ENCODE measurements at regions of chr11 and their contacts with region 1.

Region 1: GRCh38 chr11:28169816-28170215 is 61.6 kb downstream of the METTL15 start:
- DNase-seq: peak; percentile 71
- ATAC-seq: peak; percentile 79
- H3K4me3 ChIP-seq: no peak overlapping the region
- H3K27ac ChIP-seq: peak overlapping the region; percentile 53; the same call in 1 of the 2 replicates
- H3K4me1 ChIP-seq: peaks cover 6% of the 10 kb centered on the region
- H3K27me3 ChIP-seq: no peaks in the 10 kb centered on the region
- CTCF ChIP-seq: no peak
- POLR2A ChIP-seq: no peak
- RAD21 ChIP-seq: no peak

Region 2: DNA sequence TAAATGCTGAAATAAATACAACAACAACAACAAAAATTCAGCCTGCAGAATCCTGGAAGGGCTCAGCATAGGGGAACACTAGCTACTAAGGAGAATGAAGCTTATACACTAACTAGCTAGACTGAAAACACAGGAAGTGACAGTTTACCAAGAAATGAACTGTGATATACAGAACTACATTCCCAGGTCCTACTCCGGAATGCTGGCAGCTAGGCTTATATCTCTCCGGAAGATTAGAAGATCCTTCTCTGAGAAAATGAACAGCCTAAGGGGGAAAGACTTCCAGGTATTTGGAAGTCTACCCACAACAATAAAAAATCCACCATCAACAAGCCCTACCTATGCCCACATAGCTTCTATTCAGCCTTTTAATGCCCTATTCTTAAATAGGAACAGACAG is 837.8 kb before region 1 on chr11:
- CTCF ChIA-PET with region 1: no interaction called
- POLR2A ChIA-PET with region 1: no interaction called
- dilution Hi-C with region 1: no loop called
- in situ Hi-C with region 1: no loop called
- intact Hi-C with region 1: no loop called
- DNase-seq: peak; percentile 65
- ATAC-seq: peak; percentile 96
- H3K4me3 ChIP-seq: no peak overlapping the region
- H3K27ac ChIP-seq: no peak overlapping the region
- H3K4me1 ChIP-seq: peaks cover 6% of the 10 kb centered on the region
- H3K27me3 ChIP-seq: no peaks in the 10 kb centered on the region
- CTCF ChIP-seq: no peak
- POLR2A ChIP-seq: no peak
- RAD21 ChIP-seq: no peak

Region 3: DNA sequence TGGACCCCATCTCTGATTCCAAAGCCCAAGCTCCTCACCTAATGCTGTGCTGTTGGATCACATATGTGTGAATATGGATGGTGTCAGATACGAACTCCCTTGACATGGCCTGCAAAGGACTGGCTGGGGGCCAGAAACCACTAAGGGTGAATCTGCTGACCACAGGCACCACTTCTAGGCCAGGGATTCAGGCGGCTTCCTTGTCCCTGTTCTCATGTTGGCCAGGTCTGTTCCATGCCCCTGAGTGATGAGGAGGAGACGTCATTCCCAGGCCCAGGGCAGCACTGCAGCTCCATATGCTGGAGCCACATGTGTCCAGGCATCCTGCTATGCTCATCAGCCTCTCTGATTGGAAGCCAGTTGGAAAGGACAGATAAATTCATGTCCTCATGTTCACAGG is 339.6 kb before region 1 on chr11:
- CTCF ChIA-PET with region 1: no interaction called
- POLR2A ChIA-PET with region 1: no interaction called
- dilution Hi-C with region 1: no loop called
- in situ Hi-C with region 1: no loop called
- intact Hi-C with region 1: no loop called
- DNase-seq: no peak
- ATAC-seq: no peak
- H3K4me3 ChIP-seq: no peak overlapping the region
- H3K27ac ChIP-seq: no peak overlapping the region
- H3K4me1 ChIP-seq: no peaks in the 10 kb centered on the region
- H3K27me3 ChIP-seq: no peaks in the 10 kb centered on the region
- CTCF ChIP-seq: no peak
- POLR2A ChIP-seq: no peak
- RAD21 ChIP-seq: no peak

Region 4: GRCh38 chr11:28133146-28133545 is 36.7 kb before region 1 on chr11:
- CTCF ChIA-PET with region 1: no interaction called
- POLR2A ChIA-PET with region 1: no interaction called
- dilution Hi-C with region 1: no loop called
- in situ Hi-C with region 1: no loop called
- intact Hi-C with region 1: loop called (anchors 5 kb)
- DNase-seq: peak; percentile 34
- ATAC-seq: no peak
- H3K4me3 ChIP-seq: no peak overlapping the region
- H3K27ac ChIP-seq: no peak overlapping the region
- H3K4me1 ChIP-seq: no peaks in the 10 kb centered on the region
- H3K27me3 ChIP-seq: no peaks in the 10 kb centered on the region
- CTCF ChIP-seq: no peak
- POLR2A ChIP-seq: no peak
- RAD21 ChIP-seq: no peak